ENCODE measurements at regions of chr13 and their contacts with region 1.

Region 1: DNA sequence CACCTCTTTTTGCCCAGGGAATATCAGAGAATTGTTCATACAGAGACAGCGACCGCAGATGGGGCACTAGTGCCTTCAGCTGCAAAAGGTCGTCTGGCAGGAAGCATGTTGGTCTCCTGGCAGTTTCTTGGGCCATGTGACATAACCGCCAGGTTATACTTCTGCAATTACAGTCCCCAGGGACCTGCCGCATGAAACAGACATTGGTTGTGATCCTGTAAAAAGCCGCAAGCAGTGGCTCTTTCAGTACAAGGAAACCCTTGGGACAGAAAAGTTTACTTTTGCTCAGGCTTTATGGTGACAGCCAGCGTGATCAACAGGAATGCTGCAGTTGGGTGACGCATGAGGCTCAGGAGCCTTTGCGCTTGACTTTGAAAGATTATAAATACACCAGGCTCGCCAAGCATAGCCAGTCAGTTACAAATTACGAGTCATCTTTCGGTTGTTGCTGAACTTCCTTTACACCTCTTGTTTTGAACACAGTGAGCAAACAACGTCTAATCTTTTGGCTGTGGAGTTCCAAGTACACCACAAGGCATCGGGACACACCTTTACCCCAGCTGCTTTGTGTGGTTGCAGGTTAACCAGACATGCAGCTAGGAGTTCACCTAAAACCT is 50.5 kb upstream of the UBE2L5 start:
- DNase-seq: peak; percentile 47 to 91 (median 60)
- ATAC-seq: peak; percentile 64
- H3K4me3 ChIP-seq: peak overlapping the region; percentile 30
- H3K4me3 Mint-ChIP-seq: peak overlapping the region; percentile 21
- H3K27ac ChIP-seq: peak overlapping the region; percentile 62 to 74
- H3K27ac Mint-ChIP-seq: peak overlapping the region; percentile 93
- H3K4me1 ChIP-seq: peaks cover 93% of the 10 kb centered on the region
- H3K4me1 Mint-ChIP-seq: peaks cover 82% of the 10 kb centered on the region
- H3K27me3 ChIP-seq: no peaks in the 10 kb centered on the region
- H3K27me3 Mint-ChIP-seq: no peaks in the 10 kb centered on the region
- CTCF ChIP-seq: no peak

Region 2: DNA sequence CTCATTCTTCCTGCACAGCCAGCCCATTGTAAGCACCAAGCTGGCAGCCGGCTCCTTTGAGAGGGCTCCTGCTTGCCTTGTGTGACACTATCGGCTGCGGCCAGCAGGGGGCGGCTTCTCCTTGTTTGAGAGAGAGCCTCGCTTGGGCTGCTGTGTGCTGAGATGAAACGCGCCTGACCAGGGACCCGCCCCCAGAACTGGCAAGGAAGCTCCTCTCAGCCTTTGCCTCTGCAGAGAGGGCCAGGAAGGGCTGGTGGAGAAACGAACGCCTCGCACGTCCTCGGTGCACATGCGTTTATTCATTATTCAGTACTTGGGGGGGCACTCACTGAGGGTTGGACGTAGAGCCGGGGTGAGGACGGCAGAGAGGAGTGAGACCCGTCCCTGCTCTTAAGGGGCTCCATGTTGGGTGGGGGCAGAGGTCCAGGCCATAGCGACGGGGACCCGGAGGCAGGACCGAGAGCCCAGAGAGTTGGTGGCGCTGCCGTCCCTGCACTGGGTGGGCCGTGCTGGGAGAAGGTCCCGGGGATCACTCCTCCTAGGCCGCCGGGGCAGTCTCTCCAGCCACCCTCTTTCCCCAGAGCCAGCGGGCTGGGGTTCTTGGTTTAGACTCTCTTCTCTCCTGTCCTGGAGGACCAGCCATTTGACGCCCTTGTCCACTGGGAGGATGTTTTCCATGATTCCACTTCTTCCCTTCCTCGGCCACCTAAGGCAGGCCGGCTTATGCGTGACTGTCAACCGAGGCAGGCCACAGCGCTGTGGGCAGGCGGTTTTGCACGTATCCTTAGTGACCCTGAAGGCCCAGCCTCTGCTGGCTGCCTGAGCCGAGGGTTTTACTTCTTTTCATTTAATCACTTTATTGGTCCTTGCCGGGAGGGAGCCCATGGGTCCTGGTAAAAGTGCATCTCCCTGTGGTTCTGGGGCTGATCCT is 238.9 kb before region 1 on chr13:
- CTCF ChIA-PET with region 1: interaction called, 7 read pairs
- POLR2A ChIA-PET with region 1: interaction called, 7 read pairs
- intact Hi-C with region 1: loop called in 1 of 2 experiments (anchors 5 kb)
- DNase-seq: peak; percentile 93 to 99 (median 98)
- ATAC-seq: peak; percentile 100
- H3K4me3 ChIP-seq: no peak overlapping the region
- H3K4me3 Mint-ChIP-seq: peak overlapping the region; percentile 22
- H3K27ac ChIP-seq: no peak overlapping the region
- H3K27ac Mint-ChIP-seq: no peak overlapping the region
- H3K4me1 ChIP-seq: peaks cover 13% of the 10 kb centered on the region
- H3K4me1 Mint-ChIP-seq: peaks cover 15% of the 10 kb centered on the region
- H3K27me3 ChIP-seq: no peaks in the 10 kb centered on the region
- H3K27me3 Mint-ChIP-seq: no peaks in the 10 kb centered on the region
- CTCF ChIP-seq: peak; percentile 84

Region 3: GRCh38 chr13:30204564-30204963 is 167.2 kb before region 1 on chr13:
- CTCF ChIA-PET with region 1: no interaction called
- POLR2A ChIA-PET with region 1: no interaction called
- intact Hi-C with region 1: no loop called
- DNase-seq: no peak
- ATAC-seq: no peak
- H3K4me3 ChIP-seq: no peak overlapping the region
- H3K4me3 Mint-ChIP-seq: no peak overlapping the region
- H3K27ac ChIP-seq: no peak overlapping the region
- H3K27ac Mint-ChIP-seq: no peak overlapping the region
- H3K4me1 ChIP-seq: no peaks in the 10 kb centered on the region
- H3K4me1 Mint-ChIP-seq: peaks cover 7% of the 10 kb centered on the region
- H3K27me3 ChIP-seq: no peaks in the 10 kb centered on the region
- H3K27me3 Mint-ChIP-seq: no peaks in the 10 kb centered on the region
- CTCF ChIP-seq: no peak

Region 4: GRCh38 chr13:30355384-30355699 is 16.4 kb before region 1 on chr13:
- CTCF ChIA-PET with region 1: interaction called, 3 read pairs
- POLR2A ChIA-PET with region 1: interaction called, 5 read pairs
- intact Hi-C with region 1: loop called in 1 of 2 experiments (anchors 2 kb)
- DNase-seq: peak in 10 of 14 experiments; percentile 15 to 61 (median 31)
- ATAC-seq: peak; percentile 46
- H3K4me3 ChIP-seq: no peak overlapping the region
- H3K4me3 Mint-ChIP-seq: no peak overlapping the region
- H3K27ac ChIP-seq: no peak overlapping the region
- H3K27ac Mint-ChIP-seq: no peak overlapping the region
- H3K4me1 ChIP-seq: peaks cover 19% of the 10 kb centered on the region
- H3K4me1 Mint-ChIP-seq: peaks cover 25% of the 10 kb centered on the region
- H3K27me3 ChIP-seq: no peaks in the 10 kb centered on the region
- H3K27me3 Mint-ChIP-seq: no peaks in the 10 kb centered on the region
- CTCF ChIP-seq: no peak

Region 5: DNA sequence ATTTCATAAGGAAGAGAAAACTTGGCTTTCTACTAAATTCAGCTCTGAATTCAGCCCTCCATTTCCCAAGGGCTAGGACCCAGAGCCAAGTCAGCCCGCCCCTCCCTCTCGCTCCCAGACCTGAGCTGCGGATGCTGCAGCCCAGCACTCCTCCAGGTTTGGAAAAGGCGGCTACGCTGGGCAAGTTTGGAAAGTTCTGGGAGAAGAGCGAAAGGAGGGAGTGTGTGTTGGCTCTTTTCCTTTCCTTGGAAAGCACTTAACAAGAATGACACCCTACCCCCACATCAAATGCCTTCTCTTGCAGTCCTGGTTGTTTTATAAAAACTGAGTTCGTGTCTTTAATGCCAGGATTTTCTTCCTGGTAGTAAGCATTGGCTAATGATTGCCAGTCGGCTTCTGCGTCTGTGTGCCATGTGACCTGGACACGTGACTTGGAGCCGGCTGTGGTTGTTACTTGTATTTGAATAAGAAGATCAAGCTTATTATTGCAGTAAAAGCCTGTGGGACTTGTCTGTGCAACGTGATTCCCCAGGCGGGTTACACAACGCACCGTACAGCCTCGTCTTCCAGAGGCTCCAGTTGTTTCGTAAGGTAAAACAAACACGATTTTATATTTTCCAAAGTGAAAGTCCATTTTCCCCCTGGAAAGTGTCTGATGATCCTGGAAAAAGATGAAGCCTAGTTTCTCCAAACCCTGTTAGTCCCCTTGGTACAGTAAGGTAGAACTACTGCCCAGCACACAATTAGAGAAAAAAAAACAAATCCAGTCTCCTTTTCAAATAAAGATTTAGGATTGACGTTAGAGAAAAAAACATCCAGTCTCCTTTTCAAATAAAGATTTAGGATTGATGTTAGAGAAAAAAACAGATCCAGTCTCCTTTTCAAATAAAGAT is 23.7 kb after region 1 on chr13:
- CTCF ChIA-PET with region 1: interaction called, 51 read pairs
- POLR2A ChIA-PET with region 1: interaction called, 254 read pairs
- intact Hi-C with region 1: loop called (anchors 1 to 2 kb)
- DNase-seq: peak; percentile 48 to 89 (median 73)
- ATAC-seq: peak; percentile 78
- H3K4me3 ChIP-seq: peak overlapping the region; percentile 62
- H3K4me3 Mint-ChIP-seq: peak overlapping the region; percentile 90
- H3K27ac ChIP-seq: peak overlapping the region; percentile 82 to 94
- H3K27ac Mint-ChIP-seq: peak overlapping the region; percentile 89
- H3K4me1 ChIP-seq: peaks cover 37% of the 10 kb centered on the region
- H3K4me1 Mint-ChIP-seq: peaks cover 58% of the 10 kb centered on the region
- H3K27me3 ChIP-seq: no peaks in the 10 kb centered on the region
- H3K27me3 Mint-ChIP-seq: no peaks in the 10 kb centered on the region
- CTCF ChIP-seq: no peak

Region 6: GRCh38 chr13:30453727-30454126 is 82.0 kb after region 1 on chr13:
- CTCF ChIA-PET with region 1: interaction called, 4 read pairs
- POLR2A ChIA-PET with region 1: interaction called, 3 read pairs
- intact Hi-C with region 1: loop called in 1 of 2 experiments (anchors 1 kb)
- DNase-seq: peak in 1 of 14 experiments; percentile 19
- ATAC-seq: no peak
- H3K4me3 ChIP-seq: no peak overlapping the region
- H3K4me3 Mint-ChIP-seq: no peak overlapping the region
- H3K27ac ChIP-seq: no peak overlapping the region
- H3K27ac Mint-ChIP-seq: no peak overlapping the region
- H3K4me1 ChIP-seq: no peaks in the 10 kb centered on the region
- H3K4me1 Mint-ChIP-seq: peaks cover 13% of the 10 kb centered on the region
- H3K27me3 ChIP-seq: no peaks in the 10 kb centered on the region
- H3K27me3 Mint-ChIP-seq: no peaks in the 10 kb centered on the region
- CTCF ChIP-seq: no peak

Region 7: DNA sequence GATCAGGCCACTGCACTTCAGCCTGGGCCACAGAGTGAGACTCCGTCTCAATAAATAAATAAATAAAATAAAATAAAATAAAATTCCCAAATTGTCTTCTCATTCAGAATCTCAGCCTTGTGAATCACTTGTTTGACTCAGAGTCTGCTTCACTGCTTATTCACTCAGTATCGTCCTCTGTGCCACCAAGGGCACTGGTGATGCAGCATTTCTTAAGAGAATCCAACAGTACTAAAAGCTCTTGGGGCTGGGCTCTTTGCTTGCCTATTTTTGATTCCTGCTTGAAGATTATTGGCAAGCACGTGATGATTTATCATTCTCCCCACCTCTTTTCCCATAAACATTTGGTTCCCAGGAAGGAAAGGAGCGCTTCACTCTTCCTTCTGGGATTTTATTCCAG is 148.8 kb after region 1 on chr13:
- CTCF ChIA-PET with region 1: no interaction called
- POLR2A ChIA-PET with region 1: no interaction called
- intact Hi-C with region 1: no loop called
- DNase-seq: no peak
- ATAC-seq: no peak
- H3K4me3 ChIP-seq: no peak overlapping the region
- H3K4me3 Mint-ChIP-seq: no peak overlapping the region
- H3K27ac ChIP-seq: no peak overlapping the region
- H3K27ac Mint-ChIP-seq: no peak overlapping the region
- H3K4me1 ChIP-seq: no peaks in the 10 kb centered on the region
- H3K4me1 Mint-ChIP-seq: peaks cover 7% of the 10 kb centered on the region
- H3K27me3 ChIP-seq: no peaks in the 10 kb centered on the region
- H3K27me3 Mint-ChIP-seq: no peaks in the 10 kb centered on the region
- CTCF ChIP-seq: no peak

Region 8: GRCh38 chr13:30739761-30740642 is 368.2 kb after region 1 on chr13:
- CTCF ChIA-PET with region 1: interaction called, 4 read pairs
- POLR2A ChIA-PET with region 1: no interaction called
- intact Hi-C with region 1: loop called in 1 of 2 experiments (anchors 5 kb)
- DNase-seq: peak; percentile 15 to 81 (median 54)
- ATAC-seq: peak; percentile 55
- H3K4me3 ChIP-seq: peak overlapping the region; percentile 42
- H3K4me3 Mint-ChIP-seq: peak overlapping the region; percentile 83
- H3K27ac ChIP-seq: peak overlapping the region; percentile 31 to 52
- H3K27ac Mint-ChIP-seq: peak overlapping the region; percentile 82
- H3K4me1 ChIP-seq: peaks cover 92% of the 10 kb centered on the region
- H3K4me1 Mint-ChIP-seq: peaks cover 80% of the 10 kb centered on the region
- H3K27me3 ChIP-seq: no peaks in the 10 kb centered on the region
- H3K27me3 Mint-ChIP-seq: no peaks in the 10 kb centered on the region
- CTCF ChIP-seq: no peak

Measured in CD4-positive, alpha-beta T cell (primary cell).